Activated B cell treated with CpG ODN at 0.5 μM for 24 hours (primary cell): ENCODE measurements at regions of chr1 and their contacts with region 1.

Region 1: DNA sequence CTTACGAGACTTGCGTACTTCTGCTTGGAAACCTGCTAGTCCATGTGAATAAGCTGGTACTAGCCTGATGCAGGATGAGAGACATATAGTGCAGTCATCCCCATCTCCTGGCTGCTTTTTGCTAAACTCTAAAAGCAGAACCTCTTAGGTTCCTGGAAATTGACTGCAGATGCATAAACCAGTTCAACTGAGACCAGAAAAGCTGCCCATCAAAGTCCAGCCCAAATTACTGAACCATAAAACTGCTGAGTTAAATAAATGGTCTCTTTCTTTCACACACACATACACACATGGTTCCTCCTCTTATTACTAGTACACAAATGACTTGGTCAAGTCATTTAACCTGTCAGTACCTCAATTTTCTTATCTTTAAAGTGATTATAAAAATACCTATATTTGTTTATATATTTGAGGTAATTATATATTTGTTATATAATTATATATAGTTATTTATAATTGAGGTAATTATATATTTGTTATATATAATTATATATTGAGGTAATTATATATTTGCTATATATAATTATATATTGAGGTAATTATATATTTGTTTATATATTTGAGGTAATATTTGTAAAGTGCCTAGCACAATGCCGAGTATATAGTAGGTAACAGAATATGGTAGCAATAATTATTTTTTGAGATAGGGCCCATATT is 25.2 kb upstream of the RABGAP1L start:
- DNase-seq: no peak
- ATAC-seq: peak; percentile 95
- H3K4me3 Mint-ChIP-seq: peak overlapping the region; percentile 49
- H3K27ac Mint-ChIP-seq: peak overlapping the region; percentile 81
- H3K4me1 Mint-ChIP-seq: peaks cover 33% of the 10 kb centered on the region
- H3K27me3 Mint-ChIP-seq: no peaks in the 10 kb centered on the region
- CTCF ChIP-seq: no peak

Region 2: DNA sequence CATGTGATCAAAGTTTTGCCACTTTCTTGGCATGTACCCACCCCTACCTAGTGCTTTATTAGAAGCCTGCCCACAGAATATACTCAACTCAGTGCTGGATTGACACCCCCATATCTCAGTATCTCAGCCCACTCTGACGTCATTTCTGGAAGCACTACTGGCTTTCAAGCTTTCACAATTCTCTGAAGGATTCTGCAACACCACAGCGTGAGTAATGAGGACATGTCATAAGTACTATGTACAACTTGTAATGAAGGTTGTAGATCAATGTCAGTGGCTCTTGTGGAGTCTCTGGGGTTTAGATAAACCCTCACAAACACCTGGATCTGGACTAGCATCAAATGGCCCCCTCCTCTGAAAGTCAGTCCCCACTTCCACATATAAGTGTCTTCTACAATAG is 984.2 kb before region 1 on chr1:
- CTCF ChIA-PET with region 1: no interaction called
- POLR2A ChIA-PET with region 1: no interaction called
- intact Hi-C with region 1: no loop called
- DNase-seq: no peak
- ATAC-seq: no peak
- H3K4me3 Mint-ChIP-seq: no peak overlapping the region
- H3K27ac Mint-ChIP-seq: no peak overlapping the region
- H3K4me1 Mint-ChIP-seq: no peaks in the 10 kb centered on the region
- H3K27me3 Mint-ChIP-seq: peaks cover 8% of the 10 kb centered on the region
- CTCF ChIP-seq: no peak

Region 3: DNA sequence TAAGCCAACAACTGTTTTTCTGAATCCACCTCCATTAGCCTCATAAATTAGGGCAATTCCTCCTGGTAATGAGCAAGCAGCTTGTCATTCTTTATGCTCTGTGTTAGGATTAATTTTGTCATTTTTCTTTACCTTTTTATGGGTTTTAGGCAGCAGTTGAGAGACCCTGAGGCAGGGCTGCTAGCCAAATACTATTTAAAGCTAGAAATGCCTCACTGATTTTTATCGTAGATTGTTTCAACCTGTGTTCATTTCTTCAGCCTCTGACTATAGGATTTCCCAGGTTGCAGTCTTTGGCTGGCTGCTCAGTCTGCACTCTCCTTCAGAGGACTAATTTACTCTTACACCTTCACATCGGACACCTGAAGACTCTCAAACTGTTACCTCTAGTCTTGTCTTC is 36.7 kb before region 1 on chr1:
- CTCF ChIA-PET with region 1: no interaction called
- POLR2A ChIA-PET with region 1: no interaction called
- intact Hi-C with region 1: loop called (anchors 5 kb)
- DNase-seq: no peak
- ATAC-seq: no peak
- H3K4me3 Mint-ChIP-seq: no peak overlapping the region
- H3K27ac Mint-ChIP-seq: no peak overlapping the region
- H3K4me1 Mint-ChIP-seq: no peaks in the 10 kb centered on the region
- H3K27me3 Mint-ChIP-seq: no peaks in the 10 kb centered on the region
- CTCF ChIP-seq: no peak

Region 4: GRCh38 chr1:174114788-174115448 is 19.2 kb before region 1 on chr1:
- CTCF ChIA-PET with region 1: no interaction called
- POLR2A ChIA-PET with region 1: no interaction called
- intact Hi-C with region 1: loop called (anchors 2 kb)
- DNase-seq: no peak
- ATAC-seq: peak; percentile 68
- H3K4me3 Mint-ChIP-seq: no peak overlapping the region
- H3K27ac Mint-ChIP-seq: no peak overlapping the region
- H3K4me1 Mint-ChIP-seq: peaks cover 11% of the 10 kb centered on the region
- H3K27me3 Mint-ChIP-seq: no peaks in the 10 kb centered on the region
- CTCF ChIP-seq: peak; percentile 36